ENCODE measurements at regions of chr5 and their contacts with region 1.

Region 1: GRCh38 chr5:146940295-146940694 is 61.7 kb upstream of the PPP2R2B start:
- DNase-seq: no peak
- ATAC-seq: no peak
- H3K4me3 ChIP-seq: no peak overlapping the region
- H3K4me3 Mint-ChIP-seq: no peak overlapping the region
- H3K27ac ChIP-seq: no peak overlapping the region
- H3K27ac Mint-ChIP-seq: no peak overlapping the region
- H3K4me1 ChIP-seq: no peaks in the 10 kb centered on the region
- H3K4me1 Mint-ChIP-seq: no peaks in the 10 kb centered on the region
- H3K27me3 ChIP-seq: no peaks in the 10 kb centered on the region
- H3K27me3 Mint-ChIP-seq: no peaks in the 10 kb centered on the region
- CTCF ChIP-seq: no peak

Region 2: GRCh38 chr5:146825033-146825432 is 115.3 kb before region 1 on chr5:
- CTCF ChIA-PET with region 1: no interaction called
- POLR2A ChIA-PET with region 1: no interaction called
- intact Hi-C with region 1: loop called in 1 of 2 experiments (anchors 10 kb)
- DNase-seq: peak in 2 of 9 experiments; percentile 6 to 10
- ATAC-seq: no peak
- H3K4me3 ChIP-seq: no peak overlapping the region
- H3K4me3 Mint-ChIP-seq: no peak overlapping the region
- H3K27ac ChIP-seq: no peak overlapping the region
- H3K27ac Mint-ChIP-seq: no peak overlapping the region
- H3K4me1 ChIP-seq: no peaks in the 10 kb centered on the region
- H3K4me1 Mint-ChIP-seq: no peaks in the 10 kb centered on the region
- H3K27me3 ChIP-seq: no peaks in the 10 kb centered on the region
- H3K27me3 Mint-ChIP-seq: no peaks in the 10 kb centered on the region
- CTCF ChIP-seq: no peak